Naive thymus-derived CD4-positive, alpha-beta T cell (primary cell): ENCODE measurements at regions of chr13 and their contacts with region 1.

Region 1: GRCh38 chr13:74230984-74231501 is 96.8 kb upstream of the KLF12 start:
- DNase-seq: peak in 7 of 9 donors; percentile 37 to 78 (median 69)
- ATAC-seq: peak; percentile 85
- H3K4me3 ChIP-seq: peak overlapping the region; percentile 61
- H3K4me3 Mint-ChIP-seq: peak overlapping the region; percentile 72 to 87 (median 84)
- H3K27ac ChIP-seq: peak overlapping the region; percentile 70
- H3K27ac Mint-ChIP-seq: peak overlapping the region; percentile 86 to 97 (median 90)
- H3K4me1 ChIP-seq: peaks cover 0 to 29% of the 10 kb centered on the region in 2 donors
- H3K4me1 Mint-ChIP-seq: peaks cover 8 to 62% (median 52%) of the 10 kb centered on the region in 7 donors
- H3K27me3 ChIP-seq: no peaks in the 10 kb centered on the region
- H3K27me3 Mint-ChIP-seq: no peaks in the 10 kb centered on the region

Region 2: DNA sequence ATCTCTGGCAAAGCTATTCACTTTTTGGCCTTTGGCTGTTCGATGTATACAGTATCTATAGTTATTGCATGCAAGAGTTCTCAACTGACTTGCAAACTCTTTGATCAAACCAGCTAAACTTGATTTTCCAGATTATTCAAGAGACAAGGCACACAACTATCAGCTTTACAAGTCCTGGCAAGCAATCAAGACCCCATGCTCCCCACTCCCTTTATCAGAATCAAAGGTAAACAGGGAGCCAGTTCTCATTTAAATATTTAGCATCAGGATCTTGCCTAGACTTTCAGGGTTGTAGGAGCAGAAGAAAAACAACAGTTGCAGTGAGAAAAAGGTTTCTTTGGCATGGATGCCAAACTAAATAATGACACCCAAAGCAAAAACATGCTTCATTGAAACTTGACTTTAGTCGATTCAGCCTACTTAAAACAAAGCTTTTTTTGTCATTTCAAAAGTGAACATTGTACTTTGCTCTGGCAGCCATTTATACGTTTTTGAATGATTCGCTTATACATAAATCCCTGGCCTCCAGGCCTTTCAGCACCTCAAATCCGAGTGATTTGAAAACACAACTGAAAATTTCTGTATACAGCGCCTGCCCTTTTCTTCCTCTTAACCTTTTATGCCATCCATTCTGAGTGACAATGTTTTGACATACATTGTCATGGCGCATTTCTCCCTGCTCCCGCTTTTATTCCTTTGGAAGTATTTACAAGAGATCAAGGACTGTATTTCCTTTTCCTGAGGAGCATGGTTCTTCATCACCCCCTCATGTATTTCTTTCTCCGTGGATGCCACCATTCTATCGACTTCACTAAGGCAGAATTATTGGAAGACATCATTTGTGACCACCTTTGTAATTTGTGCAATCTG is 831.5 kb before region 1 on chr13:
- CTCF ChIA-PET with region 1: no interaction called
- POLR2A ChIA-PET with region 1: no interaction called
- intact Hi-C with region 1: no loop called
- DNase-seq: no peak
- ATAC-seq: no peak
- H3K4me3 ChIP-seq: no peak overlapping the region
- H3K4me3 Mint-ChIP-seq: no peak overlapping the region
- H3K27ac ChIP-seq: no peak overlapping the region
- H3K27ac Mint-ChIP-seq: no peak overlapping the region
- H3K4me1 ChIP-seq: no peaks in the 10 kb centered on the region
- H3K4me1 Mint-ChIP-seq: no peaks in the 10 kb centered on the region
- H3K27me3 ChIP-seq: no peaks in the 10 kb centered on the region
- H3K27me3 Mint-ChIP-seq: peaks cover 0 to 7% (median 0%) of the 10 kb centered on the region in 5 donors

Region 3: GRCh38 chr13:74026753-74027152 is 204.3 kb before region 1 on chr13:
- CTCF ChIA-PET with region 1: interaction called, 4 read pairs
- POLR2A ChIA-PET with region 1: no interaction called
- intact Hi-C with region 1: loop called in 1 of 2 experiments (anchors 5 kb)
- DNase-seq: peak; percentile 22 to 77 (median 68)
- ATAC-seq: peak; percentile 94
- H3K4me3 ChIP-seq: peak overlapping the region; percentile 21
- H3K4me3 Mint-ChIP-seq: peak overlapping the region; percentile 77 to 92 (median 84)
- H3K27ac ChIP-seq: peak overlapping the region; percentile 77
- H3K27ac Mint-ChIP-seq: peak overlapping the region; percentile 80 to 97 (median 94)
- H3K4me1 ChIP-seq: peaks cover 51 to 59% of the 10 kb centered on the region in 2 donors
- H3K4me1 Mint-ChIP-seq: peaks cover 36 to 97% (median 94%) of the 10 kb centered on the region in 7 donors
- H3K27me3 ChIP-seq: no peaks in the 10 kb centered on the region
- H3K27me3 Mint-ChIP-seq: no peaks in the 10 kb centered on the region

Region 4: DNA sequence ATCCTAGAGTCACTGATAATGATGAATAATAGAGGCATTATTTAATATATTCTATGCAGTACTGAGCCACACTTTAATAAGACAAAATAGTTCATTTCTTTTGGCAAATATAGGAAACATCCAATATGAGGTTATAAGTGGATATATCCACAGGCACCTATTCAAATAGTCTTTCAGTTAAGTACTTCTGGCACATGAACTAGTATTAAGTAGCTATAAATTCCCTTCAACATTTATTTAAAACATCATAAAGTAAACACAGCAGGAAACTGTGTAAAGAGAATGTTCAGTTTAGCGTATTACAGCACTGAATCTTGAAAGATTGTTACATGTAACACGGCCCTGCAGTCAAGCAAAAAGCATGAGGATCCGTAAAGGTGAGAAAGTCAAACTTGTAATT is 366.5 kb after region 1 on chr13:
- CTCF ChIA-PET with region 1: no interaction called
- POLR2A ChIA-PET with region 1: no interaction called
- intact Hi-C with region 1: no loop called
- DNase-seq: no peak
- ATAC-seq: no peak
- H3K4me3 ChIP-seq: no peak overlapping the region
- H3K4me3 Mint-ChIP-seq: no peak overlapping the region
- H3K27ac ChIP-seq: no peak overlapping the region
- H3K27ac Mint-ChIP-seq: no peak overlapping the region
- H3K4me1 ChIP-seq: no peaks in the 10 kb centered on the region
- H3K4me1 Mint-ChIP-seq: no peaks in the 10 kb centered on the region
- H3K27me3 ChIP-seq: no peaks in the 10 kb centered on the region
- H3K27me3 Mint-ChIP-seq: peaks cover 0 to 17% (median 5%) of the 10 kb centered on the region in 5 donors